MCF 10A (cell line): ENCODE measurements at regions of chr4 and their contacts with region 1.

Region 1: GRCh38 chr4:41281038-41281634 is 24.4 kb downstream of the UCHL1 start:
- DNase-seq: peak; percentile 91
- H3K4me3 Mint-ChIP-seq: no peak overlapping the region
- H3K27ac Mint-ChIP-seq: no peak overlapping the region
- H3K4me1 Mint-ChIP-seq: no peaks in the 10 kb centered on the region
- H3K27me3 Mint-ChIP-seq: no peaks in the 10 kb centered on the region
- CTCF ChIP-seq: peak; percentile 83

Region 2: GRCh38 chr4:41264212-41264611 is 16.9 kb before region 1 on chr4:
- CTCF ChIA-PET with region 1: interaction called, 18 read pairs
- POLR2A ChIA-PET with region 1: no interaction called
- intact Hi-C with region 1: no loop called
- DNase-seq: no peak
- H3K4me3 Mint-ChIP-seq: no peak overlapping the region
- H3K27ac Mint-ChIP-seq: no peak overlapping the region
- H3K4me1 Mint-ChIP-seq: peaks cover 7% of the 10 kb centered on the region
- H3K27me3 Mint-ChIP-seq: no peaks in the 10 kb centered on the region
- CTCF ChIP-seq: no peak

Region 3: DNA sequence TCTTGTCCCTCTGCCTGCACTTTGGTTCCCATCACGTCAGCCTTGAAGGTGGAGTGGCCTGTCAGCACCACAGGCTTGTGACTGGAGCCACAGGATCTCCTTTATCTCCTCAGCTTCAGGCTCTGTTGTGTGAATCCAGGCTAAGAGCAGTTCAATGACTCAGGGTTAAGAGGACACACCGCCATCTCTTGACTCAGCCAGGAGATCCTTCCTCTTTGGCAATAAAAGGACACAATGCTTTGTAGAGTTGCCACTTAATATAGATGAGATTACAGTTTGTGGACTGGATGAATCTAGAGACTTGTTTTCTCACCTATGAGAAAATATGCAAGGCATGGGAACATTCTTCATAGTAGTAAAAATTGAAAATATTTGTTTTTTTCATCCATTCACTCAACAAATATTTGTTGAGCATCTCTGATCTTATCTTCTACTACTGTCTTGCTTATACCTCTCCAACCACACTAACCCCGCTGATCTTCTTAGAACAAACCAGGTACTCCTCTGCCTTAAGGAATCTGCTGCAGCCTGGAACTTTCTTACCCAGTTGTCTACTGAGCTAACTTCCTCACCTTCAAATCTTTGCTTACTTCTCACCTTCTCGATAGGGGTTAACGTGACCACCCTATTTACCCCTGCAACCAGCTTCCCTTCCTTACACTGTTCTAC is 37.9 kb after region 1 on chr4:
- CTCF ChIA-PET with region 1: interaction called, 11 read pairs
- POLR2A ChIA-PET with region 1: no interaction called
- intact Hi-C with region 1: no loop called
- DNase-seq: peak; percentile 38
- H3K4me3 Mint-ChIP-seq: no peak overlapping the region
- H3K27ac Mint-ChIP-seq: peak overlapping the region; percentile 5
- H3K4me1 Mint-ChIP-seq: peaks cover 18% of the 10 kb centered on the region
- H3K27me3 Mint-ChIP-seq: no peaks in the 10 kb centered on the region
- CTCF ChIP-seq: no peak

Region 4: DNA sequence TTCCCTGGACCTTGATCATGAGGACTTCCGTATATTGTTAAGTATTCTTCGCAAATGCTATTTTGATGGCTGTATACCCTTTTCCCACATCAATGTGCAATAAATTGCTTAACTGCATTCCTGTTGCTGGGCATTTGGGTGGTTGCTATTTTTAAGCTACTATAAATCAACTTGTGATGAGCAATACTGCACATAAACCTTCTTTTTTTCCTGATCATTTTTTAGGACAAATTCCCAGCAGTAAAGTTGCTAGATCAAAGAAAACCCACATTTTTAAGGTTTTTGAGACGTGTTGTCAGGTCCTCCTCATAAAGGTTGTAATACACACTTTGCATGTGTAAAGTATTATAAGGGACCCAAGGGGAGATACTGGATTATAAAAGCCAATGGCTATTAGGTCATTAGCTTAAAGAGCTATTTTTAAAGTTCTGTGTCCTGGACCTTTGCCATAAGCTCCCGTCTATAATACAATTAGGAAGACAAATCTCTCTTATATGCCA is 292.4 kb after region 1 on chr4:
- CTCF ChIA-PET with region 1: interaction called, 7 read pairs
- POLR2A ChIA-PET with region 1: no interaction called
- intact Hi-C with region 1: loop called (anchors 2 kb)
- DNase-seq: peak; percentile 73
- H3K4me3 Mint-ChIP-seq: peak overlapping the region; percentile 9
- H3K27ac Mint-ChIP-seq: peak overlapping the region; percentile 96
- H3K4me1 Mint-ChIP-seq: peaks cover 45% of the 10 kb centered on the region
- H3K27me3 Mint-ChIP-seq: no peaks in the 10 kb centered on the region
- CTCF ChIP-seq: no peak

Region 5: GRCh38 chr4:41882625-41883347 is 601.6 kb after region 1 on chr4:
- CTCF ChIA-PET with region 1: interaction called, 6 read pairs
- POLR2A ChIA-PET with region 1: no interaction called
- intact Hi-C with region 1: loop called (anchors 2 kb)
- DNase-seq: peak; percentile 57
- H3K4me3 Mint-ChIP-seq: peak overlapping the region; percentile 65
- H3K27ac Mint-ChIP-seq: peak overlapping the region; percentile 65
- H3K4me1 Mint-ChIP-seq: peaks cover 15% of the 10 kb centered on the region
- H3K27me3 Mint-ChIP-seq: no peaks in the 10 kb centered on the region
- CTCF ChIP-seq: peak; percentile 88